Left colon (tissue), 2 donors: ENCODE measurements at regions of chr3 and their contacts with region 1.

Region 1: DNA sequence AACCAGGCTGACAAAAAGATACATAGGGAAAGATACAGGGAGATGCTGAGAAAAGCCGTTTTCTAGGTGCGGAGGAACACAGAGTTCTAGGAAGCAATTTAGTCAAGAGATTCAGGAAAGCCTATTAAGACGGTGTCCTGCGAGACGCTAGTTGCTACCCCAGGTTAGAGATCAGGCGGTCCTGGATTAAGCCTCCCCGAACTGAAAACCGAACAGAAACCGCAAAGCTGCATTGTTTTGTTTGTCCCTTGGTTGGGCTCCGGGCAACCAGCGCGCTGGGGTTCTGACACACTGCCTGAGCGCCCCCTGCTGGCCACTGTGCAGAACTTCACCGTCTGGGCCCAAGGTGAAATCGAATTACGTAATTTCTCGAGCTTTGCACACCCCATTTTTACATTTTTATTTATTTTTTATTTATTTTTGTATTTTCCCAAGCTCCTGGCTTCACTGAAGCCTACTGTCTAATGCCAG is 37.3 kb upstream of the NDUFB4 start:
- DNase-seq: peak; percentile 83
- ATAC-seq: peak; percentile 76

Region 2: GRCh38 chr3:120102674-120103073 is 456.1 kb before region 1 on chr3:
- intact Hi-C with region 1: no loop called
- DNase-seq: no peak
- ATAC-seq: no peak

Region 3: GRCh38 chr3:120245386-120245785 is 313.4 kb before region 1 on chr3:
- intact Hi-C with region 1: loop called in 1 of 2 experiments (anchors 2 kb)
- DNase-seq: no peak
- ATAC-seq: no peak

Region 4: GRCh38 chr3:120417272-120417911 is 141.4 kb before region 1 on chr3:
- intact Hi-C with region 1: loop called in 1 of 2 experiments (anchors 5 kb)
- DNase-seq: peak; percentile 92 to 93
- ATAC-seq: peak; percentile 94

Region 5: DNA sequence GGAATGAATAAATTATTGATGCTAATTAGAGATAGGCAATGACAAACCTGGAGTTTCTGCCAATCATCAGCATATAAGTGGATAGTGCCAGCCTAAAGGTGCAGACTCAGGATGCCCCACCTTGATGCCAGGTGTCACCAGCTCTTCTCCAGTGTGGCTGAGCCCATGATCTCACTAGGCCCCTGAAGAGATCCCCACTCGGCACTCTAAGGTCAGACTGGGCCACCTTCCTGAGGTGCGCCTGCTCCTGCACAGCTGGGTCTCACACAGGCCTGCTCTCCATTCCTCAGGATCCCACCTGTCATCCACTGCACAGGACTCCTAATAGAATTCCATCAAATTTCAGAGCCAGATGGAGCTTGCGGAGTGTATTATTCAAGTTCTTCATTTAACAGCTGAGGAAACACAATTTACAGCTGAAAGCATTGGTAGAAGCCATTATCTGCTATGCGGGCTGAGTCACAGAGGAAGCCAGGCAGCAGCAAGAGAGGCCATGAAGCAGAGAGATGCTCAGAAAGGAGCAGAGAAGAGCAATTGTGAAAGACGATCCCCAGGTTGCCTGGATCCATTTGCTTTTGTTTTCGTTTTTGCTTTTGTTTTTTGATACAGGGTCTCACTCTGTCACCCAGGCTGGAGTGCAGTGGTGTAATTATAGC is 83.0 kb before region 1 on chr3:
- intact Hi-C with region 1: no loop called
- DNase-seq: no peak
- ATAC-seq: no peak

Region 6: DNA sequence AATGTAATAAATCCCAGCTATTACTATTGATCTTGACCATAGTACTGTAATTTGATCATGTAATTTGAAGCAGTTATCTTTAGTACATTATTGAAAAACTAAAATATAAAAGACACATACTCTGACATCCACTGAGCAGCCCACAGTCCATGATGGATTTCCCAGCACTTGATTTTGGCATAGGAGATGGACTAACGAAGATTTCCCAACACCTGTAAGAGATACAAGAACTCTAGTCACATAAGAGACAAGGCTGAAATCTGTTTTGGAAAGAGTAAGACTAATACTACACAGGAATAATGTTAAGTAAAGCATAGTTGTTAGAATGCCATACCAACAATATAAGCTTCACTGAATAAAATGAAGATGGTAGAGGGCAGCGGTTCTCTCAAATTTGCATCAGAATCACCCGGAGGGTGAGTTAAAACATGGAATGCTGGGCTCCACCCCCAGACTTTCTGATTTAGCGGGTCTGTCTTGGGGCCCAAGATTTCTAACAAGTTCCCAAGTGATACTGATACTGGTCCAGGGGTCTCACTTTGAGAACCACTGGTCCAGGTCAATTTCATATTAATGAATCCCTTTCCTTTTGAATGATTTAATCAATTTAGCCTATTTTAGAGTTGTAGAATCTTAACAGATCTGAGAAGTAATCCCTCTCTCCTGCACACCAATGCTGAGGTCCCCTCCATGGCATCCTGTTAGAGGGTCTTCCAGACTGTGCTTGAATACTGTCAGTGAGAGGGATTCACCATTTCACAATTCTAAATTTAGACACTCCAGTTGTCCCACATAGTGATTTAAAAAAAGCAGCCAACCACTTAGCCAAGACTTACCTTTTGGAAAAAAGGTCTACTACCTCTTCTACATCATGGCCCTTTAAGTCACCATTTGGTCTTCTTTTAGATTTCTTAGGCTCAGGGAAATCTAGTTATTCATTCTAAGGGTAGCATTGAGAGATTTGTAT is 172.1 kb after region 1 on chr3:
- intact Hi-C with region 1: no loop called
- DNase-seq: no peak
- ATAC-seq: no peak

Region 7: GRCh38 chr3:120795017-120795648 is 236.3 kb after region 1 on chr3:
- intact Hi-C with region 1: loop called (anchors 5 to 10 kb)
- DNase-seq: peak; percentile 57 to 85
- ATAC-seq: no peak